ENCODE measurements at regions of chr6 and their contacts with region 1.

Region 1: GRCh38 chr6:80133020-80133419 is 26.5 kb downstream of the BCKDHB start:
- DNase-seq: peak; percentile 40
- H3K4me3 Mint-ChIP-seq: no peak overlapping the region
- H3K27ac Mint-ChIP-seq: no peak overlapping the region
- H3K4me1 Mint-ChIP-seq: peaks cover 14% of the 10 kb centered on the region
- H3K27me3 Mint-ChIP-seq: no peaks in the 10 kb centered on the region
- CTCF ChIP-seq: no peak

Region 2: GRCh38 chr6:79536954-79537747 is 595.9 kb before region 1 on chr6 and contains the start of gene LCA5:
- CTCF ChIA-PET with region 1: no interaction called
- intact Hi-C with region 1: no loop called
- DNase-seq: peak; percentile 92
- H3K4me3 Mint-ChIP-seq: no peak within 1 kb of the TSS
- H3K27ac Mint-ChIP-seq: no peak within 1 kb of the TSS
- H3K4me1 Mint-ChIP-seq: peaks cover 45% of the 10 kb centered on the region
- H3K27me3 Mint-ChIP-seq: no peaks in the 10 kb centered on the region
- CTCF ChIP-seq: no peak
- total RNA-seq, gene LCA5: 13.9 and 18.3 TPM in 2 replicates

Region 3: GRCh38 chr6:80331974-80332373 is 199.0 kb after region 1 on chr6:
- CTCF ChIA-PET with region 1: no interaction called
- intact Hi-C with region 1: loop called (anchors 1 kb)
- DNase-seq: no peak
- H3K4me3 Mint-ChIP-seq: no peak overlapping the region
- H3K27ac Mint-ChIP-seq: no peak overlapping the region
- H3K4me1 Mint-ChIP-seq: no peaks in the 10 kb centered on the region
- H3K27me3 Mint-ChIP-seq: no peaks in the 10 kb centered on the region
- CTCF ChIP-seq: no peak